Left cardiac atrium (tissue), 4 donors: ENCODE measurements at regions of chr10 and their contacts with region 1.

Region 1: DNA sequence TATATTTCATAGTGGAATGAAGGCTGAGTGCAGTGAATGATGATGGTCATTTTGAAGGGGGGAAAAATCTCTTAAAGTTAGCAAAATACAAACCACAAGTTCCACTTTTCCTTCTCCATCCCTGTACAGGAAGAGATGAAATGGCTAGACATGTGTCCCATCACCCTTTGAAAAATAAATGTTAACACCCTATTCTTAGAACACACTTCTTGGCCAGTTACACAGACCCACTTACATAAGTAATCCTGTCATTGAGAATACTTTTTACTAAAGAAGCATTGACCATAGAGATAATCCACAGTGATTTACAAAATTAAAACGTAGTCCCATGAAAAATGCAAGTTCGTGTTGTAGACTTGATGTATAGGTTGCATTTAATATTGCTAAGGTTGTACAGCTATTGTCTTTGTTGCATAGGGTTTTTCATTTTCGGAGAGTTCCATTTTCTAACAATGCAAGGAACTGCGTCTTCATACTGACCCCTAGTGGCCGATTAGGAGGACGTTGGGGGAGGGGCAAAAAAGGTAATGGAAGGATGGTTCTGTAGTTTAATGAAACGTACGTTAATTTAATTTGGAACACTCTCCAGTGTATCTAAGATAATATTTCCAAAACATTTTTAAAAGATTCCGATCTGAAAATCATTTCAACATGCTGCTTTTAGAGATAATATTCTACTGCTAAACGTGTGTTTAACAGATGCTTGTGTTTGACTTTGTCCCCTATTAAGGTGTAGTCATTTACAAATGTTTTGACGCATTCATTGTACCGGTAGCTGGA is 60.9 kb downstream of the ARMC3 start:
- DNase-seq: peak; percentile 33
- ATAC-seq: peak; percentile 78

Region 2: GRCh38 chr10:22003079-22003913 is 985.5 kb before region 1 on chr10 and contains the start of gene DNAJC1:
- intact Hi-C with region 1: loop called in 1 of 2 experiments (anchors 5 kb)
- DNase-seq: peak; percentile 98
- ATAC-seq: peak; percentile 99 to 100
- total RNA-seq, gene DNAJC1: 16.1 to 20.8 TPM

Region 3: DNA sequence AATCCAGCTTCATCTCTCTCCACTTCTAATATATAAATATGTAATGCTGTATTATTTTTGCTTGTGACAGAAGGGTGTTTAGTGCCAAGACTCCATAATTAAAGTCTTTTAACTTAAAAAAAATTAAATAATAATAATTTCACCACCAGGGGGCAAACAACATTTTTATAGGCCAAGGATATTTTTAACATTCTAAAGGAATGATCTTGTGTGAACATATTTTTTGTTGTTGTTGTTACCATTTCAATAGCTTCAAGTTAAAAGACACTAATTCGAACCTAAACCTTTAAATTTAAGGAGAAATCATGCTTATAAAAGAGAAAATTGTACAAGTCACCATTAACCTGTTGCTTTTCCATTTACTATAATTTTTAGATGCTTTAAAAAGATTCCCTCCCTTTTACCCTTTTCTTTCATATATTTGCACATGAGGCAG is 977.8 kb before region 1 on chr10:
- intact Hi-C with region 1: loop called in 1 of 2 experiments (anchors 10 kb)
- DNase-seq: no peak
- ATAC-seq: no peak

Region 4: GRCh38 chr10:22573820-22574569 is 414.8 kb before region 1 on chr10:
- intact Hi-C with region 1: loop called in 1 of 2 experiments (anchors 10 kb)
- DNase-seq: no peak
- ATAC-seq: peak in 1 of 2 donors; percentile 23

Region 5: DNA sequence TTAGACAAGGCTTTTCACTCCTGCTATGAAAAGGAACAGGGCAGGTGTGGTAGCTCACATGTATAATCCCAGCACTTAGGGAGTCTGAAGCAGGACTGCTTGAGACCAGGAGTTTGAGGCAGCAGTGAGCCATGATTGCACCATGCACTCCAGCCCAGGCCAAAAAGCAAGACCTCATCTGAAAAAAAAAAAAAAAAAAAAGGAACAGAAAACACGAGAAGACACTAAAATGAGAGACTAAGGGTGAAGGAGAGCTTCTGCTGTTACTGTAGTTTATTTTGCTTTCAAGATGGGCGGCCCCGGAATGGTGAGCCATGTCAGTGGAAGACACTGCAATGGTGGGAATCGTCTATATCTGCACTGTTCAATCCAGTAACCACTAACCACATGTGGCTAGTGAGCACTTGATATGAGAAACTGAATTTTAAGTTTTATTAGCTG is 284.3 kb before region 1 on chr10:
- intact Hi-C with region 1: loop called in 1 of 2 experiments (anchors 10 kb)
- DNase-seq: no peak
- ATAC-seq: peak in 1 of 2 donors; percentile 25